ENCODE measurements at regions of chr1 and their contacts with region 1.

Region 1: GRCh38 chr1:94061513-94062443 is 59.2 kb downstream of the ABCA4 start:
- DNase-seq: peak; percentile 75 to 85 (median 78)
- ATAC-seq: peak; percentile 65 to 89 (median 87)
- H3K4me3 ChIP-seq: no peak overlapping the region
- H3K27ac ChIP-seq: peak overlapping the region; percentile 29 to 73 (median 54)
- H3K4me1 ChIP-seq: peaks cover 0 to 63% (median 31%) of the 10 kb centered on the region in 12 donors
- H3K27me3 ChIP-seq: no peaks in the 10 kb centered on the region
- CTCF ChIP-seq: peak; percentile 77 to 94 (median 89)
- POLR2A ChIP-seq: no peak

Region 2: GRCh38 chr1:93489756-93490155 is 572.0 kb before region 1 on chr1:
- intact Hi-C with region 1: no loop called
- DNase-seq: no peak
- ATAC-seq: no peak
- H3K4me3 ChIP-seq: no peak overlapping the region
- H3K27ac ChIP-seq: no peak overlapping the region
- H3K4me1 ChIP-seq: peaks cover 0 to 35% (median 9%) of the 10 kb centered on the region in 12 donors
- H3K27me3 ChIP-seq: no peaks in the 10 kb centered on the region
- CTCF ChIP-seq: no peak
- POLR2A ChIP-seq: no peak

Region 3: GRCh38 chr1:94095112-94095637 is 33.4 kb after region 1 on chr1:
- intact Hi-C with region 1: loop called in 2 of 10 experiments (anchors 2 to 5 kb)
- DNase-seq: peak; percentile 87 to 93 (median 89)
- ATAC-seq: peak; percentile 64 to 85 (median 83)
- H3K4me3 ChIP-seq: peak overlapping the region in 3 of 12 donors; percentile 0 to 23 (median 16)
- H3K27ac ChIP-seq: peak overlapping the region; percentile 70 to 94 (median 82)
- H3K4me1 ChIP-seq: peaks cover 0 to 79% (median 62%) of the 10 kb centered on the region in 12 donors
- H3K27me3 ChIP-seq: peaks cover 0 to 7% (median 0%) of the 10 kb centered on the region in 9 donors
- CTCF ChIP-seq: peak in 2 of 12 donors; percentile 2 to 8
- POLR2A ChIP-seq: no peak

Region 4: DNA sequence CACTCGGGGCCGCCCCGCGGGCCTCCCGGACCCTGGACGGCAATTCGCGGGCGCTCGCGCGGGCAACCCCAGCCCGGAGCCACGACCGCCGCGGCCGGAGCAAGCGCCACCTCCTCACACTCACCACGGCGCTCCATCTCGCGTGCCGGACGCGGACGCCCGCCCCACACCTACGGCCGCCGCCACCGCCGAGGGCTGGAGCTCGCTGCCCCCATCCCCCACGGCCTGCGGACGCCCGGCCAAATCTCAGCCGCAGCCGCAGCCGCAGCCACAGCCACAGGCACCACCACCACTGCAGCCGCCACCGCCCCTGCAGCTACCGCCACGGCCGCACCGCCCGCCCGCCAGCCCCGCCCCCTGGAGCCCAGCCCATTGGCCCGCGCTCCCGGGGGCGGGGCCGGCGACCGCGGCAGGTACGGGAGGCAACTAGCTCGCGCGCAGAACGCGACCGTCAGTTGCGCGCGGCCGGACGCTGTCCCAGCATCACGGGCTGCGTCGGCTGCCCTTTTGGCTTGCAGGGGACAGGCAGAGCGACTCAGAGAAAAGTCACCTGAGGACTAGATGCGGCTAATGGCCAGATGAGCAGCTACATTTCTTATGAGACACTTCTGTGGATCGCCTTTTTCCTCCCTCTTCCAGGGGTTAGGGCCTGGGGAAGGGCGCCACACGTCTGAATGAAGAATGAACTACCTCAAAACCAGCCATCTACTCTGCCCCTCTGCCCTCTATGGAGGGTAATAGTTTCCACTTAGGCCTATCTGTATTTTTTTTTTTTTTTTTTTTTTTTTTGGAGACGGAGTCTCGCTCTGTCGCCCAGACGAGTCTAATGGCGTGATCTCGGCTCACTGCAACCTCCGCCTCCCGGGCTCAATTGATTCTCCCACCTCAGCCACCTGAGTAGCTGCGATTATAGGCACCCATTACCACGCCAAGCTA is 175.8 kb after region 1 on chr1 and contains the start of gene ARHGAP29:
- intact Hi-C with region 1: loop called (anchors 2 to 5 kb)
- DNase-seq: peak; percentile 90 to 93 (median 91)
- ATAC-seq: peak; percentile 83 to 98 (median 94)
- H3K4me3 ChIP-seq: peak within 1 kb of the TSS; percentile 76 to 97 (median 86)
- H3K27ac ChIP-seq: peak within 1 kb of the TSS; percentile 91 to 99 (median 96)
- H3K4me1 ChIP-seq: peaks cover 0 to 32% (median 18%) of the 10 kb centered on the region in 12 donors
- H3K27me3 ChIP-seq: peaks cover 0 to 49% (median 0%) of the 10 kb centered on the region in 9 donors
- CTCF ChIP-seq: peak in 1 of 12 donors; percentile 15
- POLR2A ChIP-seq: peak in 1 of 2 donors; percentile 96
- total RNA-seq, gene ARHGAP29: 21.9 to 35.7 (median 29.7) TPM

Region 5: DNA sequence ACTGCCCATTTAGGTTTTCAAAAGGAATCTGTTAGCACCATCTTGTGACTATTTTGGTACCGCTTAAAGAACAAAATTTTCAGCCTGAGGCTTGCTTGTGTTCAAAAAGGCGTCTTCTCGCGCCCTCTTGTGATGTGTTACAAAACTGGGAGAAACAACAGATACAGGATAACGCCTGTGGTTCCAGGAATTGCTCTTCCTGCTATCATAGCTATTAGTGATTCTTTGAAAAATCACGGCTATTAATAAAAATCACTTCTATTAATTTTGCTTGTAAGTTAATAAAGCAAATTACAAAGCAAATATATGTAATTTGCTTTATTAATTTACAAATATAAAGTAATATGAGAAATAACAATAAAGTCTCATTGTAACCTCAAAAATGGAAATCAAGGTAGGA is 274.2 kb after region 1 on chr1:
- intact Hi-C with region 1: loop called (anchors 1 to 5 kb)
- DNase-seq: peak in 4 of 5 donors; percentile 67 to 79 (median 76)
- ATAC-seq: peak; percentile 65 to 96 (median 90)
- H3K4me3 ChIP-seq: peak overlapping the region in 1 of 12 donors; percentile 19
- H3K27ac ChIP-seq: peak overlapping the region in 3 of 12 donors; percentile 61 to 83 (median 74)
- H3K4me1 ChIP-seq: peaks cover 0 to 20% (median 13%) of the 10 kb centered on the region in 12 donors
- H3K27me3 ChIP-seq: peaks cover 0 to under 1% (median 0%) of the 10 kb centered on the region in 9 donors
- CTCF ChIP-seq: peak; percentile 71 to 98 (median 95)
- POLR2A ChIP-seq: no peak